ENCODE measurements at regions of chr12 and their contacts with region 1.

Region 1: DNA sequence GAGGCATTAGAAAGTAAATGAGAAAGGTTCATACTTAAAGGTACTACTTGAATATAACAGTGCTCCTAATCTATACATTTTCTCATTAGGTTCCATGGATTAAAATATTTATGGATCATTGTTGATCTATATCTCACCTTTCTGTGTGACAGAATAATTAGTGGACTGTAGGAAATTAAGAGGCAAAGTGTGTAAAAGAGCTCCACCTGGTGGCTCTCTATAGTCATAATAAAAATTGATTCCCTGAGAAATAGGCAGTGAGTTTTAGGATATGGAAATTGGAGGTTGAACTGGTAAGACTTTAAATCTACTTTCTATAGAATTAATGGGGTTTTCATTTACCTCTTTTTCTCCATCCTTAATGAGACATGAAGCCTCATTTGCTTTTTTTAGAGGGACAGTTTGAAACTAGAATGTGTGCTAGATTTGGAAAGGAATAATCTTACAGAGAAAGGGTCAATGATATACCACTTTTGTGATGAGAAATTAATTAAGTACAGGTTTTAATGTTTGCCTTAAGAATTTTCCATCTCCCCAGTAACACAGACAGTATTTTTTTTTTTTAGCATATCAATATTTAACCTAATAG is 11.8 kb upstream of the DERA start:
- DNase-seq: peak in 5 of 9 donors; percentile 22 to 32 (median 31)
- ATAC-seq: peak; percentile 72
- H3K4me3 ChIP-seq: no peak overlapping the region
- H3K4me3 Mint-ChIP-seq: no peak overlapping the region
- H3K27ac ChIP-seq: no peak overlapping the region
- H3K27ac Mint-ChIP-seq: peak overlapping the region in 6 of 9 donors; percentile 25 to 74 (median 53)
- H3K4me1 ChIP-seq: no peaks in the 10 kb centered on the region
- H3K4me1 Mint-ChIP-seq: peaks cover 0 to 13% (median 7%) of the 10 kb centered on the region in 7 donors
- H3K27me3 ChIP-seq: no peaks in the 10 kb centered on the region
- H3K27me3 Mint-ChIP-seq: no peaks in the 10 kb centered on the region

Region 2: GRCh38 chr12:15772405-15773018 is 126.9 kb before region 1 on chr12:
- CTCF ChIA-PET with region 1: no interaction called
- POLR2A ChIA-PET with region 1: no interaction called
- intact Hi-C with region 1: loop called (anchors 1 kb)
- DNase-seq: peak in 1 of 9 donors; percentile 11
- ATAC-seq: no peak
- H3K4me3 ChIP-seq: no peak overlapping the region
- H3K4me3 Mint-ChIP-seq: no peak overlapping the region
- H3K27ac ChIP-seq: no peak overlapping the region
- H3K27ac Mint-ChIP-seq: no peak overlapping the region
- H3K4me1 ChIP-seq: no peaks in the 10 kb centered on the region
- H3K4me1 Mint-ChIP-seq: no peaks in the 10 kb centered on the region
- H3K27me3 ChIP-seq: no peaks in the 10 kb centered on the region
- H3K27me3 Mint-ChIP-seq: peaks cover 10 to 23% (median 15%) of the 10 kb centered on the region in 5 donors

Region 3: DNA sequence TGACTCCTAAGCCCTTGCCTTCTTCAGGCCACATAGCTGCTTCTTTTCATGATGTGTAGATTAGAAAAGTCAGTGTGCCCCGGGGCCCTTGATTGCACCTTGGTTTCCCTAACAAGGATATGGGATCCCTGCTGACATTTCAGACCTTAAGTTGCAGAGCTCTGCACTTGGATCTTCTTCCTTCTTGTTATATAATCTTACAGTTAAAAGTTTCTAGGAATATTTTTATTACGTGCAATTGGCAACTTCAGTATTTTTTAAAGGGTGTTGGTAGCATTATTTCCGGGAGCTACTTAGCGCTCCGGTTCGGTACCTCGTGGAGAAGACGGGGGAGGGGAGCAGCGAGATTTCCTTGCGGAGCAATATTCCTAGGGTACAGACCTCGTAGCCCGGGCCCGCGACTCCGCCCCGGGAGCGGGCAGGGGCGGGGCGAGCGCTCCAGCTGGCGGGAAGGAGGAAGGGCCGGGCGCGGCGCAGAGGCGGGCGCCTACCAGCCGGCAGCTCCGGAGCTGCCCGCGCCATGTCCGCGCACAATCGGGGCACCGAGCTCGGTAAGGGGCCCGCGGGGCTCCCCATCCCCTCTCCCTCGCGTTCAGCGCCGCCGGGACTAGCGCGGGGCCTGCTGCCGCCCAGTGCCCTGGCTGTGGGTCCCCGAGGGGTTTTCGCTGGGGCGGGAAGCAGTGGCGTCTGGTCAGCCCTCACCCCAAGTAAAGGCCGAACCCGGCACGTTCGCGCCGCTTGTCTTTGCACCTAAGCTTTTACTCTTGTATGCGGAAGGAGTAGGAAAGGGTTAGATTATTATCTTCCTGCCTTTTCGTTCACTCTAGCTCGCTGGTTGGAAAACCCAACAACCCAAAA is 11.7 kb after region 1 on chr12 and contains the start of gene DERA:
- CTCF ChIA-PET with region 1: interaction called, 8 read pairs
- POLR2A ChIA-PET with region 1: interaction called, 4 read pairs
- intact Hi-C with region 1: loop called in 1 of 2 experiments (anchors 1 kb)
- DNase-seq: peak; percentile 38 to 69 (median 57)
- ATAC-seq: peak; percentile 94
- H3K4me3 ChIP-seq: peak within 1 kb of the TSS; percentile 90
- H3K4me3 Mint-ChIP-seq: peak within 1 kb of the TSS; percentile 87 to 97 (median 93)
- H3K27ac ChIP-seq: peak within 1 kb of the TSS; percentile 78
- H3K27ac Mint-ChIP-seq: peak within 1 kb of the TSS; percentile 82 to 95 (median 87)
- H3K4me1 ChIP-seq: peaks cover 0 to 4% of the 10 kb centered on the region in 2 donors
- H3K4me1 Mint-ChIP-seq: peaks cover 4 to 34% (median 21%) of the 10 kb centered on the region in 7 donors
- H3K27me3 ChIP-seq: no peaks in the 10 kb centered on the region
- H3K27me3 Mint-ChIP-seq: no peaks in the 10 kb centered on the region
- total RNA-seq, gene DERA: 8.4 to 15.9 (median 12.2) TPM

Measured in naive thymus-derived CD4-positive, alpha-beta T cell (primary cell).